ENCODE measurements at regions of chr6 and their contacts with region 1.

Region 1: GRCh38 chr6:149266659-149267058 is 50.9 kb upstream of the TAB2 start:
- DNase-seq: no peak
- H3K4me3 ChIP-seq: no peak overlapping the region
- H3K27ac ChIP-seq: no peak overlapping the region
- H3K4me1 ChIP-seq: no peaks in the 10 kb centered on the region
- H3K27me3 ChIP-seq: no peaks in the 10 kb centered on the region
- CTCF ChIP-seq: no peak
- EP300 ChIP-seq: no peak
- POLR2A ChIP-seq: no peak

Region 2: DNA sequence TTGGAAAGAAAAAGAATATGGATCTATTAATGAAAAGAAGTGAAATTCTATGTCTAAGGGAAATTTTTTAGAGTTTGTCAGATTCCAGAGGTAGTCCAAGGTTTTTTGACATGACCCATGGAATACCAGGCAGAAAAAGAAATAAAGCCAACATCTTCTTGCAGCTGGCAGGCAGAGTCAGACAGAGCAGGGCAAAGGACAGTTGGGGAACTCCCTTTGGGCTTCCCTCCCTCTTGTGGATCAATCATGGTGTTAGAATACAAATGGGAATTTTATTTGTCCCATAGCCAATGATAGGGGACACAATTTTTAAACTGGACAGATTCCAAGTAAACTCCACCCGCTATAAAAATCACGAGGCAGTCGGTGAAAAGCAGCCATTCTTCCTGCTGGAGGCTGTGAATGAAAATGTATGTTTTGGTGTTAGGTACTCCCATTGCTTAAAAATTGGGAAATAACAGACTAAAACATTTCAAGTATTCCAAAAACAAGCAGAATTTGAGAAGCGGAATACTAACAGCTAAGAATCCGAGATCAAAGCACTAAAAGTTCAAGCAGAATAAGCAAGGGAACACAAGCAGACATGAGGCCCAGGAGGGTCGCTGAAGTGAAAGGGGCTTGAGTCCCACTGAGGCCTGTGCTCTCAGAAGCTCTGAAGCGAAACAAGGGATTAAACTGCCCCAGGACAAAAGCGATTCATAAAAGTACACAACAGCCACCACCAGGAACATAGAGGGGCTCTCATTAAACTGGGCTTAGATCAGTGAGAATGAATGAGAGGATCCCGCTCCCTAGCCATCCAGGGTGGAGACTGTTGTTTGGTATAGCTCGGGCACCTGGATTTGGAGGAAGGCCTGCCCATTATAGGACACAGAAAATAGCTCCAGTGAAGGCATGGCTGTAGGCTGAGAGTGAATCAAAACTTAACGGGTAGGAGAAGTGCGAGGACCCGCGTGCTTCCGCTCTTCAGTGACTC is 41.0 kb before region 1 on chr6:
- intact Hi-C with region 1: loop called in 1 of 4 experiments (anchors 2 kb)
- DNase-seq: no peak
- H3K4me3 ChIP-seq: no peak overlapping the region
- H3K27ac ChIP-seq: peak overlapping the region in 1 of 2 donors; percentile 6
- H3K4me1 ChIP-seq: peaks cover 19% of the 10 kb centered on the region
- H3K27me3 ChIP-seq: no peaks in the 10 kb centered on the region
- CTCF ChIP-seq: no peak
- EP300 ChIP-seq: no peak
- POLR2A ChIP-seq: no peak

Region 3: GRCh38 chr6:149301063-149301462 is 34.4 kb after region 1 on chr6:
- intact Hi-C with region 1: loop called in 1 of 4 experiments (anchors 1 kb)
- DNase-seq: no peak
- H3K4me3 ChIP-seq: no peak overlapping the region
- H3K27ac ChIP-seq: no peak overlapping the region
- H3K4me1 ChIP-seq: no peaks in the 10 kb centered on the region
- H3K27me3 ChIP-seq: no peaks in the 10 kb centered on the region
- CTCF ChIP-seq: no peak
- EP300 ChIP-seq: no peak
- POLR2A ChIP-seq: no peak

Measured in ovary (tissue), 10 donors.